ENCODE measurements at regions of chr7 and their contacts with region 1.

Region 1: GRCh38 chr7:37181550-37181932 is 267.1 kb downstream of the ELMO1 start:
- DNase-seq: no peak
- H3K4me3 ChIP-seq: no peak overlapping the region
- H3K27ac ChIP-seq: no peak overlapping the region
- H3K4me1 ChIP-seq: no peaks in the 10 kb centered on the region
- CTCF ChIP-seq: no peak

Region 2: GRCh38 chr7:36487756-36488336 is 693.7 kb before region 1 on chr7:
- CTCF ChIA-PET with region 1: no interaction called
- POLR2A ChIA-PET with region 1: no interaction called
- intact Hi-C with region 1: loop called (anchors 5 kb)
- DNase-seq: peak; percentile 39
- H3K4me3 ChIP-seq: no peak overlapping the region
- H3K27ac ChIP-seq: no peak overlapping the region
- H3K4me1 ChIP-seq: no peaks in the 10 kb centered on the region
- CTCF ChIP-seq: peak; percentile 78

Region 3: DNA sequence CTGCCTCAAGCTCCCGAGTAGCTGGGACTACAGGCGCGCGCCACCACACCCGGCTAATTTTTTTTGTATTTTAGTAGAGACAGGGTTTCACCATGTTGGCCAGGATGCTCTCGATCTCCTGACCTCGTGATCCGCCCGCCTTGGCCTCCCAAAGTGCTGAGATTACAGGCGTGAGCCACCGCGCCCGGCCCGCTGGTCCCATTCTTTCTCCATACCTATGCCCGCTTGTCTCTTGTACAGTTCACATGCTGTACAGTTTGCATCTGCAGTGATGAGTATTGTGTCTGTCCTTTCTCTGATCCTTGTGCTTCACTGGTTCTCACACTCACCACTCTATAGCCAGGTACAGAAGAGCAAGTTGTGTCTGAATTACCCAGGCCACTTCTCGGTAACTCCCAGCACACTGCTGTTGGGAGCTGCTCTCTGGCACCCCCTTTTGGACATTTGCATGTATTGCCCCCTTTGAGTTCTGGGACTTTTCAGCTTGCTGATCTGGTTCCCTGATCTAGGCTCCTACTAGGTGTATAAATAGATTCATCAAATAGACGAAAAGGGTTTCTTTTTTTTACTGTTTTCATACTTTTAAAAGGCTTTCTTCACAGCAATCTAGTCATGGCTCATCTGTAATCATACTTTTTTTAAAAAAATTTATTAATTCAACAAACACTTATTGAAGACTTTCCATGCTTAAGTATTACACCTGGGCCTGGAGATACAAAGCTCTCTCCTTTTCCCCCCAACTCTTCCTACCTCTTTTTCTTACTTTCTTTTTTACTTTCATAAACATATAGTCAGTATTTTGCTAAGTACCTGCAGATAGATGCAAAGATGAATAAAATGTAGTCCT is 510.7 kb before region 1 on chr7:
- CTCF ChIA-PET with region 1: no interaction called
- POLR2A ChIA-PET with region 1: no interaction called
- intact Hi-C with region 1: loop called (anchors 5 kb)
- DNase-seq: peak; percentile 58
- H3K4me3 ChIP-seq: no peak overlapping the region
- H3K27ac ChIP-seq: no peak overlapping the region
- H3K4me1 ChIP-seq: no peaks in the 10 kb centered on the region
- CTCF ChIP-seq: peak; percentile 88

Region 4: DNA sequence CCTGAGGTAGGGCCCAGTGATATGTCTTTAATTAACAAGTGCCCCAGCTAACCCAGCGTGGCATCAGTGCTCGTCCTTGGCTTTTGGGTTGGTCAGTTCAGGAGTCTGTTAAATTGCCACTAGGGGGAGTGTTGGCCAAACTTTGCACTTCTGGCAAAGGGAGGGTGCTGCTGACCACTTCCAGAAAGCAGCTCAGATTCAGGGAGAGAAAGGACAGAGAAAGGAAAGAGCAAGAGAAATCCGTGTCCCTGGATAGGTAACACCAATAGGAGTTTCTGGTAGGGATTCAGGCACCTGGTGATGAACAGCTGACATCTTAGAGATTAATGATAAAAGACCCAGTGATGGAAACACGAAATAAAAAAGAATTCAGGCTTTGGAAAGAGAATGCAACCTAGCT is 214.2 kb before region 1 on chr7:
- CTCF ChIA-PET with region 1: no interaction called
- POLR2A ChIA-PET with region 1: no interaction called
- intact Hi-C with region 1: loop called (anchors 5 kb)
- DNase-seq: peak; percentile 45
- H3K4me3 ChIP-seq: no peak overlapping the region
- H3K27ac ChIP-seq: no peak overlapping the region
- H3K4me1 ChIP-seq: no peaks in the 10 kb centered on the region
- CTCF ChIP-seq: peak; percentile 85

Region 5: GRCh38 chr7:36986429-36987362 is 194.8 kb before region 1 on chr7:
- CTCF ChIA-PET with region 1: interaction called, 6 read pairs
- POLR2A ChIA-PET with region 1: interaction called, 4 read pairs
- intact Hi-C with region 1: loop called (anchors 1 kb)
- DNase-seq: peak; percentile 50
- H3K4me3 ChIP-seq: no peak overlapping the region
- H3K27ac ChIP-seq: no peak overlapping the region
- H3K4me1 ChIP-seq: peaks cover 9% of the 10 kb centered on the region
- CTCF ChIP-seq: peak; percentile 91

Region 6: GRCh38 chr7:37765872-37766525 is 584.5 kb after region 1 on chr7:
- CTCF ChIA-PET with region 1: no interaction called
- POLR2A ChIA-PET with region 1: no interaction called
- intact Hi-C with region 1: no loop called
- DNase-seq: no peak
- H3K4me3 ChIP-seq: no peak overlapping the region
- H3K27ac ChIP-seq: no peak overlapping the region
- H3K4me1 ChIP-seq: no peaks in the 10 kb centered on the region
- CTCF ChIP-seq: no peak

Measured in OCI-LY7 (cell line).